Activated CD4-positive, alpha-beta T cell treated with anti-CD3 and anti-CD28 coated beads, Interleukin-2, amount 10 ng/mL, durations not matched to agents 24 days and 14 days (primary cell): ENCODE measurements at regions of chr14 and their contacts with region 1.

Region 1: DNA sequence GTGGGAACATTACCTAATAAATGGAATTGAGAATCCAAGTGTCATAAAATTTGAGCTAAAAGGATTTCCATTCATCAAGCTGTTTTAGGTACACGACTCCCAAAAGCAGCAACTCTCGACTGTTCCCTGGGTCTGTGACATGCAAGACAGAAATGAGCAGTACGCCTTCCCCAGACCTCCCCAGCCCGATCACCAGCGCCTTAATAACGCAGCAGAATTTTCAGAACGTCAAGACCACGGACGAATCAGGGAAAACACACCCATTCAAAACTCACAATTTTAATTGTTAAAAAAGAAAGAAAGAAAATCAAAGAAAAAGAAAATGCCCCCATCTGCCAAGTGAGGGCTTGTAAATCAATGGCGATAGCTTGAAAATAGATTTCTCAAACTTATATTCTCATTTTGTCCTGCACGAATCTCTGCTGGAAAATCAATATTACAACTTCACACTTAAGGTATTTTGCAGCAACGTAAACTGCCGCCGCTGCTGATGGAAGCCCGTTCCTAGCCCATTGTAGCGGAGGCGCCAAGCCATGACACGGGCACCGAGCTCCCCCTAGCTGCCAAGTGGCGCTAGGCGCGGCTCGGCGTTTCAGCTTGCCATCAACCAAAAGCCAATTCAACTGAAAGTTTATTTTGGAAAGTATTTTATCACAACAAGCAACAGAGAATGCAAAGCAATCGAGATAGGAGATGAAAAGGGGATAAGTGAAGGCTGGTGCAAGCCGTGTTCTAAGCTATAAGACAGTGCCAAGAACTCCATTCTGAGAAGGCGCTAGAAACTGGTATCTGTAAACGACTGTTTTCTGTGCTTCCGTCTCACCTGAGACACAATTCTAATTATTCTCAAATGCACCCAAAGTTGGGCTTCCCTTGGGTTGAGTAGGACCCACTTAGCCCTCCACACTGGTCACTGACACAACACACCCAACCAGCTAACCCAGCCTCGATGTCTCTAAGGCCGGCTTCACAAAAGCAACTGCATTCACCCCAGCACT is 5.5 kb downstream of the BCL11B start:
- DNase-seq: peak; percentile 97
- H3K4me3 Mint-ChIP-seq: peak overlapping the region; percentile 91
- H3K27ac Mint-ChIP-seq: peak overlapping the region; percentile 99
- H3K4me1 Mint-ChIP-seq: peaks cover 65% of the 10 kb centered on the region
- H3K27me3 Mint-ChIP-seq: no peaks in the 10 kb centered on the region

Region 2: GRCh38 chr14:97707603-97708002 is 1558.9 kb before region 1 on chr14:
- intact Hi-C with region 1: loop called (anchors 5 kb)
- DNase-seq: peak; percentile 75
- H3K4me3 Mint-ChIP-seq: no peak overlapping the region
- H3K27ac Mint-ChIP-seq: peak overlapping the region; percentile 28
- H3K4me1 Mint-ChIP-seq: peaks cover 72% of the 10 kb centered on the region
- H3K27me3 Mint-ChIP-seq: no peaks in the 10 kb centered on the region

Region 3: DNA sequence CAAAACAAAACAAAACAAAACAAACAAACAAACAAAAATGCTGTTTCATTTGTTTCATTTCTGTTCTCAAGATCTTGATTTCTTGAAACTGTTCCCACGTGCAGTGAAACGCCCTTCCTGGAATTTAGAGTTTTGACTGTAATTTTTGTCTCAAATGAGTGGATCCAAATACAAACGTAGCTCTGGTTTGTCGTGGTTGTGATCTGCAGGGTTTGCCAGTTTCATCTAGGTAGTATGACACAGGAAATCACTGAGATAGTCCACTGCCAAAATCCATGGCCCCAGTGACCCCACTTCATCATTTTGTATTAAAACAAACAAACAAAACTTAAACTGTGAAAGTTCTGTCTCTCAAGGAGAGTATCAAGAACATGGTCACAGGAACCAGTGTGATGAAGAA is 833.0 kb before region 1 on chr14:
- intact Hi-C with region 1: loop called (anchors 10 kb)
- DNase-seq: peak; percentile 61
- H3K4me3 Mint-ChIP-seq: peak overlapping the region; percentile 15
- H3K27ac Mint-ChIP-seq: peak overlapping the region; percentile 42
- H3K4me1 Mint-ChIP-seq: peaks cover 22% of the 10 kb centered on the region
- H3K27me3 Mint-ChIP-seq: no peaks in the 10 kb centered on the region

Region 4: DNA sequence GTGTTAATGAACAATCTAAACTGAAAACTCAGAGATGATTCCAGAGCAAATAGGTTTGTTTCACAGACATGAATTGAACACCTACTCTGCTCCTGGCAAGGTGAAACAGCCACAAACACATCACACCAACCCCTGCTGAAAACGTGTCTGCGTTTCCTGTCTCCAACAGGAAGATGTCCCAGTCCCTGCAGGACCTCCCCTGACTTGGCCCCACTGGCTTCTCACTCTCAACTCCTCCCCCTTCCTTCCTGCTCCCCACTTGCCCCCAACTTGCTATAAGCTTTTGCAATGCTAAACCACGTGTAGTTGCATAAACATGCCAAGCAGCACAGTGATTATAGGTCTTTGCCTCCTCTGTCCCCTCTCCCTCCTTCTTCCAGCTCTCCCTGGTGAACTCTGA is 562.0 kb before region 1 on chr14:
- intact Hi-C with region 1: no loop called
- DNase-seq: peak; percentile 76
- H3K4me3 Mint-ChIP-seq: no peak overlapping the region
- H3K27ac Mint-ChIP-seq: no peak overlapping the region
- H3K4me1 Mint-ChIP-seq: peaks cover 15% of the 10 kb centered on the region
- H3K27me3 Mint-ChIP-seq: peaks cover 6% of the 10 kb centered on the region

Region 5: DNA sequence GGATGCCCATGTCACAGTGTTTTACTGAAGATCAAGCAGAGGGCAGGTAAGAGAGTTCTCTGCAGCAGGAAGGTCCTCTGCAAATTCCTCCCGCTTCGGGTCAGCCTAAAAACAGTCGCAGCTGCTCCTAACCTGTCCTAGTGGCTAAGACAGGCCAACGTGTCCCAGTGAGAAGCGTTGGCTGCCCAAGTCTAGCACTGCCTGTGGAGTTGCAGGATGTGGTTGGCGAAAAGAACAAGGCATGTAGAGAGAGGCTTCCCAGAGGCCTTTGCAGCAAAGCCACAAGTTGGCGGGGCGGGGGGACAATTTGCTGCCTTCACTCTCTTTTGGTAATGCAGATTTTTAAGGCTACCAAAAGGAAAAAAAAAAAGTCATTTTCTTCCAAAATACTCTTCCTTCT is 334.6 kb before region 1 on chr14:
- intact Hi-C with region 1: loop called (anchors 2 kb)
- DNase-seq: peak; percentile 92
- H3K4me3 Mint-ChIP-seq: peak overlapping the region; percentile 56
- H3K27ac Mint-ChIP-seq: peak overlapping the region; percentile 84
- H3K4me1 Mint-ChIP-seq: peaks cover 48% of the 10 kb centered on the region
- H3K27me3 Mint-ChIP-seq: no peaks in the 10 kb centered on the region

Region 6: DNA sequence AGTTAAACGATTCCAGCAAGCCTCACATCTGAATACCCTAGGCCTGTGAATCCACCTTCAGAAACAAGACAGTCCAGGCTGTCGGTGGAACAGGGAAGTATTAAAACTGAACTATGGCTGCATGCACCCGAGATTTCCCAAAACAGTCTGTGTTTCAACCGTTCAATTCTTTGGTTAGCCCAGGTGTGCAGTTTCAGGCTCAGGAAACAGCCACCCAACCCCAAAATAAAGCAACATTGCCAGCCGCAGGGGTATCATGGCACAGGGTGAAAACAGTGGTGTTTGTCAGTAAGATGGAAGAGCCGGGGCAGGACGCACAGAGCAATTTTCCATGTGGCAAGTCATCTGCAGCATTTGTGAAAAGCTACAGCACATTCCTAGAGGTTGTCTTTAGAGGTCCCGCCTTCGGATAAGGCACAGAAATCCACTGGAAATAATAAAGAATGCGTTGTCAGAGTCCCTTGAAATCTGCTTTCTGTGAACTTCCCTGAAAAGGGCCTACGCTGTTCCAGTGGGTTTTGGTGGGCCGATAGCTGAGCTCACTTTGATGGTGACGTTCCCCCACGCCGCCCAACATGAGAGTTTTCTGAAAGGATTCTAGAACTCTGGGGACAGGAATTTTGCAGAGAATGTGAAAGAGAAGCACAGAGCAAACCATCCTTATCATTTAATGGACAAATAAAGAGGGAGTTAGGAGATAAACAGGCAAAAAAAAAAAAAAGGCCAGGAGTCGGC is 79.4 kb before region 1 on chr14:
- intact Hi-C with region 1: loop called (anchors 2 kb)
- DNase-seq: no peak
- H3K4me3 Mint-ChIP-seq: peak overlapping the region; percentile 80
- H3K27ac Mint-ChIP-seq: peak overlapping the region; percentile 93
- H3K4me1 Mint-ChIP-seq: peaks cover 91% of the 10 kb centered on the region
- H3K27me3 Mint-ChIP-seq: no peaks in the 10 kb centered on the region

Region 7: DNA sequence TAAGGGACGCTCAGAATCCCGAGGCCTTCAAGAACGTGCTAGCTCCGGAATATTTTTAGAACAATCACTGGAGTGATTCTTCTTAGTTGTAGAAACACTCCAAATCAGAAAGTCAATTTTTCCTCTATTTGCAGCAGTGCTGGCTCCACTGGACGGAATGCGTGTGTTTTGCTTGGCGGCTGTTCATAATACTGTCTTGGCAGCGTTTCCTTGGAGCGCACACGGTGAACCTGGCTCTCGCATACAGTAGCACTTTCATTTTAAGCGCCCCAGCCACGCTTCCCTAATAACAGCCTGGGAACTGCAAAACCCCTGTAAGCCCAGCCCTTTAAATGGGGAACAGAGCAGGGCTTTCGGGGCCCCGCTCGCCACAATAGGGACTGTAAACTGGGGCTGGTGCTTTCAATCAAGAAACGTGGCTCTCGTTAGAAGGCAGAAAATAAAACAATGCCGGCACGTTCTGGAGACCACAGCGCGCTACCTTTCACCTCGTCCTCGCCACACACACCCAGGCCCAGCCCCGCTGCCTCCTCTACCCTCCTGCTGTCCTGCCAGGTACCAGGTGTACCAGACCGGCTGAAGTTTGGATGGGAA is 74.4 kb before region 1 on chr14:
- intact Hi-C with region 1: loop called (anchors 2 kb)
- DNase-seq: peak; percentile 80
- H3K4me3 Mint-ChIP-seq: peak overlapping the region; percentile 90
- H3K27ac Mint-ChIP-seq: peak overlapping the region; percentile 89
- H3K4me1 Mint-ChIP-seq: peaks cover 89% of the 10 kb centered on the region
- H3K27me3 Mint-ChIP-seq: no peaks in the 10 kb centered on the region

Region 8: DNA sequence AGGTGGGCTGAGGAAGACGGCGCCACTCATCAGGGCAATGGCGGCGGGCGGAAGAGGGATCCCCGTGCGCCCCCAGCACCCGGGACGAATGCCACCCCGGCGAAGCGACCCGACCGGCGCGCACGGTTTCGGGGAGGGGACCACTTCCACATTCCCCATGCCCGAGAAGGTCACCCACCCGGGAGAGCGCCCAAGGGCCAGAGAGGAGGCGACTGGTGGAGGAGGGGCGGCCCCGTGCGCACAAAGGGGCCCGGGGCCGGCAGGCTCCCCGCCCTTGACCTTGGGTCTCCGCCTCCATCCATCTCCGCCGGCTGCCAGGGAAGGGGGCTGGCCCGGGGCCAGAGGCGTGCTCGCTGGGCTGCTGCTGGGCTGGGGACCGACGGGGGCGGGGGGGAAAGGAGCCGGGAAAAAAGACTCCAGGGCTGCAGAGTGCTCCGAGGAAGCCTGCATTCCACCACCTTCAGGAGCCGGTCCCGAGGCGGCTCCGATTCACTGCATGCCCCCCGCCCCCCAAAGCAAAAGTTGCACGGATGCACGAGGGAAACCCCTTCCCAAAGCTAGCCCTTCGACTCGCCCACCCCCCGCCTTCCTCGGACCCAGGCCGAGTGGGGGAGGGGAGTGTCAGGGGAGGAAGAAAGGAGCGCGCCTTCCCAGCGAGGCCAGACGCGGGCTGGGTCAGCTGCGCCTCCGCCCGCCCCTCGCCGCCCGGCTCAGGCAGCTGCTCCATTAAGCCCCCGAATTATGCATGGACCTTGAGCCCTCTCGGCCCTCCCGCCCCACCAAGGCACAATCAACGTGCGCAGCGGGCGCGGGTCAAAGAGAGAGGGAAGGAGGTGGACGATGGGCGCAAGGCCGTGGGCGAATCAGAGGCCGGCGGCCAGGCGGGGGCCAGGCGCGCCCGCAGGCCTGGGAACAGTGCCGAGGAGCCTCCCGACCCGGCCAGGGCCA is 20.6 kb before region 1 on chr14:
- intact Hi-C with region 1: loop called (anchors 1 kb)
- DNase-seq: peak; percentile 80
- H3K4me3 Mint-ChIP-seq: peak overlapping the region; percentile 90
- H3K27ac Mint-ChIP-seq: peak overlapping the region; percentile 99
- H3K4me1 Mint-ChIP-seq: peaks cover 77% of the 10 kb centered on the region
- H3K27me3 Mint-ChIP-seq: no peaks in the 10 kb centered on the region

Region 9: DNA sequence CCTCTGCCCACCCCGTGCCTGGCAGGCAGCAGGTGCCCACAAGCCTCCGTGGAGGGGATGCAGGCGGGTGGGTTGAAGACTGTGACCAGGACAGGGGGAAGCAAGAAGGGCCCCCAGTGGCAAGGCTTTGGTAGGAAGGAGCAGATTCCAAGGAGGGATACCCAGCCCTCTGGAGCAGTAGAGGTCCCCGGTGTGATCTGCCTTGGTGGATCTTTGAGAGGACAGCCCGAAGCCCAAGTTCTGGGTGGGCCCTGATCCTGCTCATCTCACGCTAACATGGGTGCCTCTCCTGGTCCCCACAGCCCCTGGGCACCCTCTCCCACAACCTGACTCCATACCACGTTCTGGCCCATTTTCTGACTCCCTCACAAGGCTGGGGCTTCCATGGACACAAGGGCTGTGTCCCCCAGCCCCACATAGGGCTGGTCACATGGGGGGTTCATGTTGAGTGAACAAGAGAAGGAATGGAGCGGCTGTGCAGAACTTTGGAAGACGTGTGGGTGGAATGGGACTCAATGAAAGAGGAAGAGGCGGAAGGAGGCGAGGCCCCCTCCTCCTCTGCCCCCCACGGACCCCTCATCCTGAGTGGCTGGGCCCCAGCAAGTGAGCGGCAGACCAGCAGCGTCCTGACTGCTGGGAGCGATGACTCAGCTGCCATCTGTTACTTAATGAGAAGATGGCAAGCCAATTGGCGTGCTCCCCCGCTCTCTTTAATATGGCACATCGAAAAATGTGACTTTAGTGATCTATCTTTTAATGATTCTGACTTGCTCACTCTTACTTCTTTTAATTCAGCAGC is 82.5 kb after region 1 on chr14:
- intact Hi-C with region 1: no loop called
- DNase-seq: no peak
- H3K4me3 Mint-ChIP-seq: no peak overlapping the region
- H3K27ac Mint-ChIP-seq: no peak overlapping the region
- H3K4me1 Mint-ChIP-seq: no peaks in the 10 kb centered on the region
- H3K27me3 Mint-ChIP-seq: peaks cover 10% of the 10 kb centered on the region